A673 (cell line): ENCODE measurements at regions of chr6 and their contacts with region 1.

Region 1: DNA sequence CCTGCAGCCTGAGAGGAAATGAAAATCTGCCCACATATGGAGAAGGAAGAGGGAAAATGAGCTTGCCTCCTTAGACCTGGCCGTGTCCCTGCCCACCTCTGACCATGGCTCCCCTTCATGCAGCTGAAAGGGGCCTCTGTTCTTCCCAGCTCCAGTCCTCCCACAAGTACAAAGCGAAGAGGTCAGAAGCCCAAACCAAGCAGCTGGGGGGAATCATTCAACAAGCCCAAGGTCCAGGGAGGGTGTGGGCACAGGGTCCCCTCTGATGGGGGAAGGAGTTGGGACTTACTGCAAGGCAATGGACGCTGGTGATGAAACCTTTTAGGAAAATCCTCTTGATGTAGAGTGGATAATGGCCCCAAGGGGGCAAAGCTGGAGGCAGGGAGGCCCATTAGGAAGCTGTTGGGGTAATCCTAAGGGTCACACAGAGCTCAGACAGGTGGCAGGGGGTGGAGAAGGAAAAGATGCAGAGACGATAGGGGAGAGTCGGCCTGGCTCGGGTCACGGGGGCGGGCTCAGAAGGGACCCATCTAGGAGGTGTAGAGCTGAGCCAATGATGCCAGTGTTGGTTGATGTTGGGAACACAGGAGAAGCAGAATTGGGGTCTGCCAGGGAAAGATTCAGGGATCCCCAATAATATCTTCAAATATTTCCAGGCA is 16.1 kb upstream of the GRM4 start:
- DNase-seq: no peak
- H3K4me3 ChIP-seq: no peak overlapping the region
- H3K27ac ChIP-seq: no peak overlapping the region
- H3K4me1 ChIP-seq: no peaks in the 10 kb centered on the region
- H3K27me3 ChIP-seq: no peaks in the 10 kb centered on the region
- CTCF ChIP-seq: no peak

Region 2: GRCh38 chr6:33914645-33915044 is 247.3 kb before region 1 on chr6:
- CTCF ChIA-PET with region 1: no interaction called
- POLR2A ChIA-PET with region 1: no interaction called
- intact Hi-C with region 1: no loop called
- DNase-seq: peak; percentile 10
- H3K4me3 ChIP-seq: no peak overlapping the region
- H3K27ac ChIP-seq: no peak overlapping the region
- H3K4me1 ChIP-seq: peaks cover 15% of the 10 kb centered on the region
- H3K27me3 ChIP-seq: no peaks in the 10 kb centered on the region
- CTCF ChIP-seq: no peak

Region 3: GRCh38 chr6:34142061-34142998 is 19.7 kb before region 1 on chr6:
- CTCF ChIA-PET with region 1: interaction called, 10 read pairs
- POLR2A ChIA-PET with region 1: no interaction called
- intact Hi-C with region 1: no loop called
- DNase-seq: no peak
- H3K4me3 ChIP-seq: no peak overlapping the region
- H3K27ac ChIP-seq: no peak overlapping the region
- H3K4me1 ChIP-seq: peaks cover 16% of the 10 kb centered on the region
- H3K27me3 ChIP-seq: peaks cover 31% of the 10 kb centered on the region
- CTCF ChIP-seq: no peak

Region 4: DNA sequence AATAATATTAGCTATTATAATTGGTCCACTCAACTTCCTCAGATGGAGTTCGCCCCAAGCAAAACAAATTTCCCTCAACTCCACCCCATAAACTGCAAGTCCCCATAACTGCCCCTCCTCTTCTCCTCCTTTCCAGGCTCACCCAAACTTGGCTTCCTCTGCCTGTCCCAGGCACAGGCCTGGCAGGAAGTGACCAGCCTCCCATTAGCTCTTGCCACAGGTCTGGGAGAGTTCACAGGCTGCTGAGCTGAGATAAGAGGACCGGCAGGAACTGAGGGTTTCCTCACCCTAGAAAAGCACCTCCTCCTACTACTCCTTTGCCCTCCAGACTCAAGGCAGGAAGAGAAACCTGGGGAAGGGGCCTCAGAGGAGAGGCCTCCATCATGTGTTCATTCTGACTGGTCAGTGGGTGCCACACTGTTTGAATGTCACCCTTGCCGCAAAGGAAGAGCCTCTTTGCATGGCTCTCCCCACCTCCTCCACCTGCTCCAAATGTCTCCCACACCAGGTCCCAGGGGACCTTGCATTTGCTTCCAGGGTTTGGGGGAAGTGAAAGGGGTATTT is 111.3 kb after region 1 on chr6:
- CTCF ChIA-PET with region 1: no interaction called
- POLR2A ChIA-PET with region 1: no interaction called
- intact Hi-C with region 1: no loop called
- DNase-seq: no peak
- H3K4me3 ChIP-seq: no peak overlapping the region
- H3K27ac ChIP-seq: no peak overlapping the region
- H3K4me1 ChIP-seq: no peaks in the 10 kb centered on the region
- H3K27me3 ChIP-seq: no peaks in the 10 kb centered on the region
- CTCF ChIP-seq: no peak